Sciatic nerve (tissue), 2 donors: ENCODE measurements at regions of chr9 and their contacts with region 1.

Region 1: GRCh38 chr9:80995759-80996158 is 693.6 kb downstream of the TLE1 start:
- DNase-seq: no peak
- ATAC-seq: no peak

Region 2: GRCh38 chr9:80964374-80964773 is 31.4 kb before region 1 on chr9:
- intact Hi-C with region 1: no loop called
- DNase-seq: no peak
- ATAC-seq: no peak

Region 3: DNA sequence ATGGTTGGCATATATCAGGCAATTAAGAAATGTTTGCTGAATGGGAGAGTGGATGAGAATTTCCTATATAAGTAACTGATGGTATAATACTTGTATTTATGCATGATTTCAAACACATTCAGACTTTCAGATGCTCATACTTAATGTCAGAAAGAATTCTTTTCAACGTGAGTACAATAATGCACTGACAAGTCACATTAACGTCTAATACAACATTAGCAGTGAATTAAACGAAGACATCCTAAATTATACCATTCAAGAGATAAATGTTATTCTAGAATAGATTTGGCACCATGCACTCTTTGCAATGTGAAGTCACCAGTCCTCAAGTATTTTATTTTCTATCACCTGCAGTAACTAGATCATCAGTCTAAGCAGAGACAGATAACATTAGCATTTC is 19.4 kb before region 1 on chr9:
- intact Hi-C with region 1: loop called (anchors 2 kb)
- DNase-seq: no peak
- ATAC-seq: no peak